CD8-positive, alpha-beta T cell (primary cell): ENCODE measurements at regions of chr10 and their contacts with region 1.

Region 1: GRCh38 chr10:84499846-84500245 is 171.5 kb downstream of the CCSER2 start:
- DNase-seq: no peak
- ATAC-seq: no peak
- H3K4me3 ChIP-seq: no peak overlapping the region
- H3K4me3 Mint-ChIP-seq: no peak overlapping the region
- H3K27ac ChIP-seq: no peak overlapping the region
- H3K27ac Mint-ChIP-seq: peak overlapping the region; percentile 38
- H3K4me1 ChIP-seq: peaks cover 4% of the 10 kb centered on the region
- H3K4me1 Mint-ChIP-seq: peaks cover 32% of the 10 kb centered on the region
- H3K27me3 ChIP-seq: no peaks in the 10 kb centered on the region
- H3K27me3 Mint-ChIP-seq: no peaks in the 10 kb centered on the region
- CTCF ChIP-seq: no peak

Region 2: GRCh38 chr10:84452003-84452402 is 47.8 kb before region 1 on chr10:
- CTCF ChIA-PET with region 1: no interaction called
- POLR2A ChIA-PET with region 1: no interaction called
- intact Hi-C with region 1: loop called in 1 of 2 experiments (anchors 10 kb)
- DNase-seq: no peak
- ATAC-seq: no peak
- H3K4me3 ChIP-seq: no peak overlapping the region
- H3K4me3 Mint-ChIP-seq: no peak overlapping the region
- H3K27ac ChIP-seq: no peak overlapping the region
- H3K27ac Mint-ChIP-seq: peak overlapping the region; percentile 37
- H3K4me1 ChIP-seq: no peaks in the 10 kb centered on the region
- H3K4me1 Mint-ChIP-seq: peaks cover 27% of the 10 kb centered on the region
- H3K27me3 ChIP-seq: no peaks in the 10 kb centered on the region
- H3K27me3 Mint-ChIP-seq: no peaks in the 10 kb centered on the region
- CTCF ChIP-seq: no peak

Region 3: DNA sequence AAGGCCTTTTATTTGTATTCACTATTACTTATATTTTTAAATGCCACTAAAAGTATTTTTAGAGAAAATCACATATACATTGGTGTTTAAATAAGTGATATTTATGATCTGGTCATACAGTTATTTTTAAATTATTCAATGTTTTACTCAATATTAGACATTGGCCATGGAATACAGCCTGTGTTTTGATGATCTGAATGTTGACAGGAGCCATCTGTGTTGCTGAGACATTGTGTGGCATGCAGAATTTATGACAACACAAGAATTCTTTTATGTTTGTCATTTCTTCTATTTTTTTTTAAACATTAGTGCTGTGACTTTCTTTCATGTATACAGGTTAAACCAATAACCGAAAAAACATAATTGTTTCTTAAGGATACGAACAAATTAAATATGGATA is 15.3 kb before region 1 on chr10:
- CTCF ChIA-PET with region 1: no interaction called
- POLR2A ChIA-PET with region 1: no interaction called
- intact Hi-C with region 1: loop called in 1 of 2 experiments (anchors 2 kb)
- DNase-seq: no peak
- ATAC-seq: no peak
- H3K4me3 ChIP-seq: no peak overlapping the region
- H3K4me3 Mint-ChIP-seq: no peak overlapping the region
- H3K27ac ChIP-seq: no peak overlapping the region
- H3K27ac Mint-ChIP-seq: no peak overlapping the region
- H3K4me1 ChIP-seq: no peaks in the 10 kb centered on the region
- H3K4me1 Mint-ChIP-seq: peaks cover 22% of the 10 kb centered on the region
- H3K27me3 ChIP-seq: no peaks in the 10 kb centered on the region
- H3K27me3 Mint-ChIP-seq: no peaks in the 10 kb centered on the region
- CTCF ChIP-seq: no peak

Region 4: DNA sequence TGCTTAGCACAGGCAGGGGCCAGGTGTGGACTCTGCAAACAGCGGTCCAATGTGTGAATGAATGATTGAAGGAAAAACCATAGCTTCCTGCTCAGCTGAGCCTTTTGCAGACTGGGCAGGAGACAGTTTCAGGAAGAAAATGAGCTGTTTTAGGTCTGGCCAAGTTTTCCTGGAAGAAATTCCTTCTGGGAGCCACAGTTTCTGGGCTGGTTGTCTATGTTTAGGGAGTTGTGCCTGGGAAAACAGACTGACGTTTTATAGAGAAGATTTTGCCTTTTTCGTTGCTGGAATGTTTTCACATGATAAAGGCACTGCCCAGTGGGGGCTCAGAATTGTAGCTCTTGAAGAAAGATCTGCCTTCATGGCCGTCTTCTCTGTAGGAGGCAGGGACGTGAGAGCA is 83.7 kb after region 1 on chr10:
- CTCF ChIA-PET with region 1: no interaction called
- POLR2A ChIA-PET with region 1: no interaction called
- intact Hi-C with region 1: no loop called
- DNase-seq: no peak
- ATAC-seq: no peak
- H3K4me3 ChIP-seq: no peak overlapping the region
- H3K4me3 Mint-ChIP-seq: no peak overlapping the region
- H3K27ac ChIP-seq: no peak overlapping the region
- H3K27ac Mint-ChIP-seq: no peak overlapping the region
- H3K4me1 ChIP-seq: no peaks in the 10 kb centered on the region
- H3K4me1 Mint-ChIP-seq: no peaks in the 10 kb centered on the region
- H3K27me3 ChIP-seq: no peaks in the 10 kb centered on the region
- H3K27me3 Mint-ChIP-seq: peaks cover 18% of the 10 kb centered on the region
- CTCF ChIP-seq: no peak

Region 5: DNA sequence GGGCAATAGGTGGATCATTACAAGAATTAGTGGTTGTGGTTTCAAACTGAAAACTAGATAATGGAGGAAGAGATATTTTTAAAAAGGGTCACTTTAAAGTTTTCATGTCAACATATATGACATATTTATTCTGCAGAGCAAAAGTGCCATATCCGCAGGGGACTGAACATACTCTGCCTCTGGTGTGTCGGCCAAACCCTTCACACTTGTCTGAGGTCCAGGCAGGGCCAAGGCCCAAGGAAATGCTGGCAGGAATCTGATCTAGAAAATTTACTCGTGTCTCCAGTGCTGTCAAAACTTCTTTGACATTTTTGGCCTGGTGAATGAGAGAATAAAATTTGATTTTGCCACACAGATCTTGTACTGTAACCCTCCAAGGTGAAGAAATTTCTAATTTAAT is 390.9 kb after region 1 on chr10:
- CTCF ChIA-PET with region 1: no interaction called
- POLR2A ChIA-PET with region 1: no interaction called
- intact Hi-C with region 1: no loop called
- DNase-seq: no peak
- ATAC-seq: no peak
- H3K4me3 ChIP-seq: no peak overlapping the region
- H3K4me3 Mint-ChIP-seq: no peak overlapping the region
- H3K27ac ChIP-seq: no peak overlapping the region
- H3K27ac Mint-ChIP-seq: no peak overlapping the region
- H3K4me1 ChIP-seq: no peaks in the 10 kb centered on the region
- H3K4me1 Mint-ChIP-seq: no peaks in the 10 kb centered on the region
- H3K27me3 ChIP-seq: no peaks in the 10 kb centered on the region
- H3K27me3 Mint-ChIP-seq: no peaks in the 10 kb centered on the region
- CTCF ChIP-seq: no peak